CD8-positive, alpha-beta T cell (primary cell): ENCODE measurements at regions of chr1 and their contacts with region 1.

Region 1: DNA sequence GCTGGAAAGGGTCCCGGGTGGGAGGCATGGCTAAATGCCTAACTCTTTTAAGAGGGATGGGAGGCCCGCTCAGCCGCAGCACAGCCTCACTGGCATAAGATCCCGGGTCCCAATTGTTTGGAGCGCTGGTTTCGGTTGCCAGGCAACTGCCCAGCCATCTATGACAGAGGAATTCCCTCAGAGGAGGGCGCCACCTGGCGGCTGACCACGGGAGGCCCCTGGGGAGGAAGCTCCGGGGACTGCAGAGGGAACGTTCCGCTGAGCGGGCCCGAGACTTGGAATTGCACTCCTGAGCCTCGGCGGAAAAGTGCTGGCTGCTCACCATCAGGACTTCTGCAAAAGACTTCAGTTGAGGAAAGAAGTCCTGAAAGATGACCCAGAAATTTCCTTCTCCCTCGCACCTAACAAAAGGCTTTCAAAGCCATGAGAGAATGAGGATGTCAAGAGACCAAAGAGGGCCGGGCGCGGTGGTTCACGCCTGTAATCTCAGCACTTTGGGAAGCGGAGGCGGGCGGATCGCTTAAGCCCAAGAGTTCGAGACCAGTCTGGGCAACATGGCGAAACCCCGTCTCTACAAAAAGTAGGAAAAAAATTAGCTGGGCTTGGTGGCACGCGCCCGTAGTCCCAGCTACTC is 1.1 kb upstream of the ELAPOR1 start:
- DNase-seq: peak; percentile 81 to 94 (median 89)
- ATAC-seq: peak; percentile 56
- H3K4me3 ChIP-seq: peak overlapping the region; percentile 46 to 66
- H3K4me3 Mint-ChIP-seq: peak overlapping the region; percentile 83
- H3K27ac ChIP-seq: peak overlapping the region; percentile 34 to 48
- H3K27ac Mint-ChIP-seq: peak overlapping the region; percentile 81
- H3K4me1 ChIP-seq: peaks cover 22% of the 10 kb centered on the region
- H3K4me1 Mint-ChIP-seq: peaks cover 29% of the 10 kb centered on the region
- H3K27me3 ChIP-seq: peaks cover 0 to 4% of the 10 kb centered on the region in 2 experiments
- H3K27me3 Mint-ChIP-seq: peaks cover 2% of the 10 kb centered on the region
- CTCF ChIP-seq: peak; percentile 90

Region 2: DNA sequence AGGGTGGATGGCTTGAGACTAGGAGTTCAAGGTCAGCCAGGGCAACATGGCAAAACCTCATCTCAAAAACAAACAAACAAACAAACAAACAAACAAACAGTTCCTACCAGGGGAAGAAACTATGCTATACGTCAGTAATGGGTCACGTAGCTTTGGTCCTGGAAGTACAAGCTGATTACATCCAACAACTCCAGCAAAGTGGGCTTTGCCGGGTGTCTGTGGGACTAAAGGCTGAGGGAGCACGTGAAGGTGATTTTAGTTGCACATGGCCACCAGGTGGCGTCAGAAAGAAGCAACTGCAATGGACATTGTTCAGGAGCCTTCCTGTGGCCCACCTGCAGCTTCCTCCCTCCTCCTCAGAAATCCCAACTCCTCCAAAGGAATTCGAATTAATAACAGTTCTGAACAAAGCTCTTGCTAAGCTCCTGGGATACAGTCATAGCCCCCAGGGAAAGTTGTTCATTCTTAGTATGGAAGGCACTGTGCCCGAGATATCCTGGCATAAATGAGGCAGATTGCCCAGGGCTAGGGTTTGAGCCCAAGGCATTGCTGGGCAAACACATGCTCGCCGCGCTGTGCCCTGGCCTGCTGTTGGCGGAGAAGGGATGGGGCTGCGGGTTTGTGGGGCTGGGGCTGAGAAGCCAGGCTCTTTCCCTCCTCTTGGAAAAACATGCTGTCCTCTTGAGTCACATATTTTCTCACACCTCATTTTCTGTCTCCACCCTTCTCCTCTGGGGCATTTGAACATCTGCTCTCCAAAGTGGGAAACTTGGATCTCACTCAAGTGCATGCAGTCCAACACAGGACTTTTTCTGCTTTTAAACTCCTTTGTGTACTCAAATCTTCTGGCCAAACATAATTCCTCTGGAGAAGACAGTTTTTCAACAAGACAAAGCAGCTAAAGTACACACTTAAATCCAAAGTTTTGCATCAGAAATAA is 284.5 kb before region 1 on chr1:
- CTCF ChIA-PET with region 1: interaction called, 40 read pairs
- POLR2A ChIA-PET with region 1: no interaction called
- intact Hi-C with region 1: loop called in 1 of 2 experiments (anchors 2 kb)
- DNase-seq: peak; percentile 35 to 79 (median 69)
- ATAC-seq: peak; percentile 77
- H3K4me3 ChIP-seq: no peak overlapping the region
- H3K4me3 Mint-ChIP-seq: no peak overlapping the region
- H3K27ac ChIP-seq: no peak overlapping the region
- H3K27ac Mint-ChIP-seq: no peak overlapping the region
- H3K4me1 ChIP-seq: no peaks in the 10 kb centered on the region
- H3K4me1 Mint-ChIP-seq: no peaks in the 10 kb centered on the region
- H3K27me3 ChIP-seq: no peaks in the 10 kb centered on the region
- H3K27me3 Mint-ChIP-seq: no peaks in the 10 kb centered on the region
- CTCF ChIP-seq: peak; percentile 72

Region 3: GRCh38 chr1:109027841-109028240 is 84.9 kb before region 1 on chr1:
- CTCF ChIA-PET with region 1: interaction called, 6 read pairs
- POLR2A ChIA-PET with region 1: no interaction called
- intact Hi-C with region 1: loop called in 1 of 2 experiments (anchors 2 kb)
- DNase-seq: peak in 1 of 9 experiments; percentile 15
- ATAC-seq: no peak
- H3K4me3 ChIP-seq: no peak overlapping the region
- H3K4me3 Mint-ChIP-seq: no peak overlapping the region
- H3K27ac ChIP-seq: no peak overlapping the region
- H3K27ac Mint-ChIP-seq: no peak overlapping the region
- H3K4me1 ChIP-seq: no peaks in the 10 kb centered on the region
- H3K4me1 Mint-ChIP-seq: peaks cover 2% of the 10 kb centered on the region
- H3K27me3 ChIP-seq: no peaks in the 10 kb centered on the region
- H3K27me3 Mint-ChIP-seq: no peaks in the 10 kb centered on the region
- CTCF ChIP-seq: peak; percentile 54

Region 4: DNA sequence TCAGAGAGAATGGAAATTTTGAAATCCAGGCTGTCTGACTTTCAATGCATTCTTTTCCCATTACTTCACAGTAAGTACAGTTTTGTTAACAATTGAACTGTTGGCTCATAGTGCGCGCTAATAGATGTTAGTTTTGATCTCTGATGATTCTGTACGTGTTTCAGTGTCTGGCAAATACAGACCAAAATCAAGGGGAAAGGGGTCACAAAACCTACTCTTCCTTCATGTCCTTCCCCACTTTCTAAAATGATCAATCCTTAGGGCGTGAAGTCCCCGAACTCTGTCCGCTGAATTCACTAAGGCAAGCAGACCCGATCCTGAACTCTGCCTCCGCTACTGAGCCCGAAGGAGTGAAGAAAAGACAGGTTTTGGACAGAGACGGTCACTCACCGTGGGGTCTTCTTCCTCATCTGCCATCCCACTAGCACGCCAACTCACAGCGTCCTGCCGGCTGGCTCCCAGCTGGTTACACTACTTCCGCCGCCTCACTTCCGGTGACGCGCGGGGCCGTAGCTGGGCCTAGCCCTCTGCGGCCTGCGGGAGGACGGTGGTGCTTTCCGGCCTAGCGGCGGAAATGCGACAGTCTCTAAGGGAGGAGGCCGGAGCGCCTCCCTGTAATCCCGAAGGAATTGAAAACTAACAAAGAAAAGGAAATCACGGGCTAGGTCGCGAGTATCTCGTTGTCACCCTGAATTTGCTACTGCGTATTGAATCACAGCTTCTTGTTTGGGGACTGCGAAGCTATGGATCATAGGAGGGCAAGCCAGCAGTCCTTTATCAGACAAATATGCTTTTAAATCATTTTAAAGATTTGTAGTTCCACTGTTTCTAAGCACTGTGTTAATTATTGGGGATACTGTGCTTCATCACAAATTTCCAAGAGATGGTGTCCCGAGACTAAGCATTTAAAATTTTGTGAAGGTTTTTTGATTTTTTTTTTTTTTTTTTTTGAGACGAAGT is 37.0 kb before region 1 on chr1 and contains the start of gene TAF13:
- CTCF ChIA-PET with region 1: interaction called, 8 read pairs
- POLR2A ChIA-PET with region 1: interaction called, 4 read pairs
- intact Hi-C with region 1: loop called in 1 of 2 experiments (anchors 5 kb)
- DNase-seq: peak; percentile 63 to 94 (median 86)
- ATAC-seq: peak; percentile 95
- H3K4me3 ChIP-seq: peak within 1 kb of the TSS; percentile 66 to 72
- H3K4me3 Mint-ChIP-seq: peak within 1 kb of the TSS; percentile 98
- H3K27ac ChIP-seq: peak within 1 kb of the TSS; percentile 93 to 97
- H3K27ac Mint-ChIP-seq: peak within 1 kb of the TSS; percentile 99
- H3K4me1 ChIP-seq: peaks cover 16% of the 10 kb centered on the region
- H3K4me1 Mint-ChIP-seq: peaks cover 23% of the 10 kb centered on the region
- H3K27me3 ChIP-seq: no peaks in the 10 kb centered on the region
- H3K27me3 Mint-ChIP-seq: no peaks in the 10 kb centered on the region
- CTCF ChIP-seq: no peak
- total RNA-seq, gene TAF13: 36.2 to 40.4 TPM

Region 5: GRCh38 chr1:109099938-109100773 is 12.6 kb before region 1 on chr1:
- CTCF ChIA-PET with region 1: interaction called, 67 read pairs
- POLR2A ChIA-PET with region 1: interaction called, 78 read pairs
- intact Hi-C with region 1: loop called (anchors 1 kb)
- DNase-seq: peak; percentile 95 to 98 (median 97)
- ATAC-seq: peak; percentile 91
- H3K4me3 ChIP-seq: peak overlapping the region; percentile 88 to 93
- H3K4me3 Mint-ChIP-seq: peak overlapping the region; percentile 98
- H3K27ac ChIP-seq: peak overlapping the region; percentile 86 to 93
- H3K27ac Mint-ChIP-seq: peak overlapping the region; percentile 99
- H3K4me1 ChIP-seq: peaks cover 9% of the 10 kb centered on the region
- H3K4me1 Mint-ChIP-seq: peaks cover 18% of the 10 kb centered on the region
- H3K27me3 ChIP-seq: no peaks in the 10 kb centered on the region
- H3K27me3 Mint-ChIP-seq: no peaks in the 10 kb centered on the region
- CTCF ChIP-seq: peak; percentile 83

Region 6: DNA sequence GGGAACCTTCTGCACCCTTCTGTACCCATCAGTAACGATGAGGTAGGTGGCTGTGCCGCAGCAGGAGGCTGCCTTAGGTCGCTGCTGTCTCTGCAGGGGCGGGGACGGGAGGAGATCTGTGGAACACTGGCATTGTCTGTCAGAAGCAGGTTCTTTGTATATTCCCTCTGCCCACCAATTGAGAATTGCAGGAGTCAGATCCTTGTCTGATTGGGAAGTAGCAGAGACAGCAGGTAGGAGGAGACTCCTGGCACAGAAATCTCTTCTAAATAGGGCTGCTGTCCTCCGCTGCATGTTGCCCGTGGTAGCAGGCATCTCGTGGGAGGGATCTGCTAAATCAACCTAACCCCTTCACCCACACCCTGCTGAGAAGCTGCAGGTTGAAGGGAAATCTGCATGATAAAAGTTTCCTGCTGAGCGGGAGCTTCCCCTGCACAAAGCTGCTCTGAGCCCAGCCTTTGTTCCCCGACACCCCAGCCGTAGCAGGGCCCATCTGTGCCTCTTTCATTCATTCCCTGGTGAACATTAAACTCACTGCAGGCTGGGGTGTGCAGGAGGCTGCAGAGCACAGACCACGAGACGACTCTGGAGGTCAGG is 116.9 kb after region 1 on chr1:
- CTCF ChIA-PET with region 1: no interaction called
- POLR2A ChIA-PET with region 1: no interaction called
- intact Hi-C with region 1: no loop called
- DNase-seq: no peak
- ATAC-seq: no peak
- H3K4me3 ChIP-seq: no peak overlapping the region
- H3K4me3 Mint-ChIP-seq: no peak overlapping the region
- H3K27ac ChIP-seq: no peak overlapping the region
- H3K27ac Mint-ChIP-seq: no peak overlapping the region
- H3K4me1 ChIP-seq: no peaks in the 10 kb centered on the region
- H3K4me1 Mint-ChIP-seq: peaks cover 16% of the 10 kb centered on the region
- H3K27me3 ChIP-seq: no peaks in the 10 kb centered on the region
- H3K27me3 Mint-ChIP-seq: no peaks in the 10 kb centered on the region
- CTCF ChIP-seq: no peak

Region 7: DNA sequence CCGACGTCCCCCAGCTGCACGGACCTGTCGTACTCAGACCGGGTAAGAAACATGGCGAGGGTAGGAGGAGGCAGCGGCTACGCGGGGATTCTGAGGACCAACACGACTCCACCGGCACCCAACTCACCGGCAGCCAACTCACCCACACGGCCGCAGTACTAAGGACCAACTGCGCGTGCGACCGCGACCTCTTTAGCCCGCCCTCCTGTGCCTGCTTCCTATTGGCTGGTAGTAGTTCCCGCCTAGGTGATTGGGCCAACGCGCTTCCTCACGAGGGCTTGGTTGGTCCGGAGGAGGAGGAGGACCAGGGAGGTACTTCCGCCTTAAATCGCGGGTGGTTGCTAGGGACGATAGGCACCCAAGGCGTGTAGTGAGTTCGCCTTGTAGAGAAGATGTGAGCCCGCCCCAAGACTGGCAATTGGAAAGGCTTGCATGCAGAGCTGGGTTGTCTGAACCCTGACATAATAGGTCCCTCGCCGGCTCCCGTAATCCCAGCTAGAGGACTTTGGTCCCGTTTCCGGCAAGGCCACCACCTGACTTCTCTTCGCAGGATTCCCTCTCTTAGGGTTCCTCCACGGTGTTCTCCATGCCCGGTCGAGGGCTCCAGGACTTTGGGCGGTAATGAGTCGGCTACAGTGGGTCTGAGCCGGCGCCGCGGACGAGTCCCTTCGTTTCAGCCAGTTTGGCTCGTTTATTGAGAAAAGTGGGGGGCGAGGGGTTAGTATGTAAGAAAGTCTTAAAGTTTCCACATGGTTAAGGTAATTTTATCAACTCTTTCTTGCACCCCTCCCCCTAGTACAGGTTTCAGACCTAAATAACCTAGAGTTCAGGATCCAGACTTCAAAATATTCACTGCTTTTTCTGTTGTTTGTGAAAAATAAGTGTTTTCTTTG is 313.8 kb after region 1 on chr1 and contains the start of gene PSMA5:
- CTCF ChIA-PET with region 1: no interaction called
- POLR2A ChIA-PET with region 1: no interaction called
- intact Hi-C with region 1: loop called (anchors 10 kb)
- DNase-seq: peak; percentile 87 to 99 (median 93)
- ATAC-seq: peak; percentile 90
- H3K4me3 ChIP-seq: peak within 1 kb of the TSS; percentile 83 to 84
- H3K4me3 Mint-ChIP-seq: peak within 1 kb of the TSS; percentile 98
- H3K27ac ChIP-seq: peak within 1 kb of the TSS; percentile 80 to 90
- H3K27ac Mint-ChIP-seq: peak within 1 kb of the TSS; percentile 99
- H3K4me1 ChIP-seq: peaks cover 39% of the 10 kb centered on the region
- H3K4me1 Mint-ChIP-seq: peaks cover 39% of the 10 kb centered on the region
- H3K27me3 ChIP-seq: no peaks in the 10 kb centered on the region
- H3K27me3 Mint-ChIP-seq: no peaks in the 10 kb centered on the region
- CTCF ChIP-seq: no peak
- total RNA-seq, gene PSMA5: 30.9 to 32.6 TPM